Breast epithelium (tissue), 4 donors: ENCODE measurements at regions of chr4 and their contacts with region 1.

Region 1: DNA sequence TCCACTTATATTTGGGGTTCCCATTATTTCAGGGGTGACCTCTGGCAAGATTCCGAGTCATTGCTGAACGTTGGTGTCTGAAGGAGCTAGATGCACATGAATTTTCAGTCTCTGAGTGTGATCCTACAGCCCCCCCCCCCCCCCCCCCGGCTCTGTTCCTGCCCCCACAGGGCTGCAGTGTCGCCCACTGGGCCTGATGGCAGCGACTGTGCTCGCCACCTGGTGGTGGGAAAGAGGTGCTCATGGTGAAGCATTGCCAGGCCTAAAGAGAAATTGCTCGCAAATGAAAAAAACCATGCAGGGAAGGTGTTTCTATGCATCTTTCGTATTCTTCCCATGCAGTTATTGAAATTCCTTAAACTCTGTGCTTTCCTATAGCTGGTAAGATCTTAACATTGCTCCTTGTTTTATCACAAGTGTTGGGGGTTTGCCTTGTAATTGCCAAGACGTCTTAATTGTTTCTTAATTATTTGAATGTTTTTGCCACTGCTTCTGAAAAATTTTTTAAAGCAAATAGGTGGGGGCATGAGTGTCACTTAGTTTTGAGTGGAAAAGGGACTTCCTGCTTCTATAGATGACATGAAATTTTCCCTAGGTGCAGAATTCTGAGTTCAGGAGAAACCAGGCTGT is 63.2 kb downstream of the CLDN22 start:
- DNase-seq: no peak
- H3K4me3 ChIP-seq: no peak overlapping the region
- H3K27ac ChIP-seq: no peak overlapping the region
- H3K4me1 ChIP-seq: no peaks in the 10 kb centered on the region
- H3K27me3 ChIP-seq: no peaks in the 10 kb centered on the region
- CTCF ChIP-seq: peak; percentile 20 to 62 (median 37)
- POLR2A ChIP-seq: no peak

Region 2: GRCh38 chr4:182938205-182938645 is 318.6 kb before region 1 on chr4:
- intact Hi-C with region 1: loop called (anchors 10 kb)
- DNase-seq: peak in 1 of 2 donors; percentile 76
- H3K4me3 ChIP-seq: no peak overlapping the region
- H3K27ac ChIP-seq: no peak overlapping the region
- H3K4me1 ChIP-seq: no peaks in the 10 kb centered on the region
- H3K27me3 ChIP-seq: no peaks in the 10 kb centered on the region
- CTCF ChIP-seq: peak; percentile 50 to 87 (median 59)
- POLR2A ChIP-seq: no peak

Region 3: DNA sequence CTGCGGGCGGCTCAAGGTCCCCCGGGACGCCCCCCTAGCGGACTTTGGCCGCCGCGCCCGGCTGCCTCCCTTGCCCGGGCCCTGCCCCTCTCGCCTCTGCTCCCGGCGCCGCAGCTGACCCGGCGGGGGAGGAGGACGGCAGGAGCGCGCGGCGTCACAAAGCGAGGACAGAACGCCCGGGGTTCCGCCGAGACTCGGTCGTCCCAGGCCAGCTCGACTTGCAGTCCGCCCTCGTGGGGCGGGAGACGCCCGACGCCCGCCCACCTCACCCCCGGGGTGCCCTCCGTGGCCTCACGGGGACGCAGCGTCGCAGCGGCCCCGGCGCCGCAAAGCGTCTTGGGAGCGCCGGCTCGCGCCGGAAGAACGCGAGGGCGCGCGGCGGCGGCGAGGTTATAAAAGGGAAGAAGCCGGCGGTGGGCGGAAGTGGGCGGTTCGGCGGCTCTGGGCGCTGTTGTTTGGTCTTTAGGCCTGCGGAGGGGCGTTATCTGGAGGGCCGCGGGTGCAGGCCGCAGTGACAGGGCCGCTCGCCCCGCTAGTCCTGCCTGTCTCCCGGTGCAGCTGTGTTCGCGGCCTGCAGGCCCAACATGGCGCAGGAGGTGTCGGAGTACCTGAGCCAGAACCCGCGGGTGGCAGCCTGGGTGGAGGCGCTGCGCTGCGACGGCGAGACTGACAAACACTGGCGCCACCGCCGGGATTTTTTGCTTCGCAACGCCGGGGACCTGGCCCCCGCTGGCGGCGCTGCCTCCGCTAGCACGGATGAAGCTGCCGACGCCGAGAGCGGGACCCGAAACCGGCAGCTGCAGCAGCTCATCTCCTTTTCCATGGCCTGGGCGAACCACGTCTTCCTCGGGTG is 187.6 kb after region 1 on chr4 and contains the start of gene CDKN2AIP:
- intact Hi-C with region 1: no loop called
- DNase-seq: peak; percentile 85 to 90
- H3K4me3 ChIP-seq: peak within 1 kb of the TSS; percentile 89 to 96 (median 95)
- H3K27ac ChIP-seq: peak within 1 kb of the TSS; percentile 98
- H3K4me1 ChIP-seq: peaks cover 0 to 19% of the 10 kb centered on the region in 2 donors
- H3K27me3 ChIP-seq: no peaks in the 10 kb centered on the region
- CTCF ChIP-seq: peak in 2 of 3 donors; percentile 7 to 26
- POLR2A ChIP-seq: peak; percentile 84
- total RNA-seq, gene CDKN2AIP: 22.2 to 37.3 (median 23.3) TPM